ENCODE measurements at regions of chr1 and their contacts with region 1.

Region 1: GRCh38 chr1:2557492-2558412 is 1.6 kb downstream of the TNFRSF14 start:
- DNase-seq: no peak
- ATAC-seq: peak in 5 of 8 donors; percentile 1 to 10 (median 3)
- H3K4me3 ChIP-seq: peak overlapping the region; percentile 45 to 81 (median 68)
- H3K27ac ChIP-seq: peak overlapping the region in 9 of 10 donors; percentile 91 to 95 (median 93)
- H3K4me1 ChIP-seq: peaks cover 8 to 44% (median 32%) of the 10 kb centered on the region in 9 donors
- H3K27me3 ChIP-seq: peaks cover 0 to 3% (median 0%) of the 10 kb centered on the region in 7 donors
- CTCF ChIP-seq: no peak

Region 2: DNA sequence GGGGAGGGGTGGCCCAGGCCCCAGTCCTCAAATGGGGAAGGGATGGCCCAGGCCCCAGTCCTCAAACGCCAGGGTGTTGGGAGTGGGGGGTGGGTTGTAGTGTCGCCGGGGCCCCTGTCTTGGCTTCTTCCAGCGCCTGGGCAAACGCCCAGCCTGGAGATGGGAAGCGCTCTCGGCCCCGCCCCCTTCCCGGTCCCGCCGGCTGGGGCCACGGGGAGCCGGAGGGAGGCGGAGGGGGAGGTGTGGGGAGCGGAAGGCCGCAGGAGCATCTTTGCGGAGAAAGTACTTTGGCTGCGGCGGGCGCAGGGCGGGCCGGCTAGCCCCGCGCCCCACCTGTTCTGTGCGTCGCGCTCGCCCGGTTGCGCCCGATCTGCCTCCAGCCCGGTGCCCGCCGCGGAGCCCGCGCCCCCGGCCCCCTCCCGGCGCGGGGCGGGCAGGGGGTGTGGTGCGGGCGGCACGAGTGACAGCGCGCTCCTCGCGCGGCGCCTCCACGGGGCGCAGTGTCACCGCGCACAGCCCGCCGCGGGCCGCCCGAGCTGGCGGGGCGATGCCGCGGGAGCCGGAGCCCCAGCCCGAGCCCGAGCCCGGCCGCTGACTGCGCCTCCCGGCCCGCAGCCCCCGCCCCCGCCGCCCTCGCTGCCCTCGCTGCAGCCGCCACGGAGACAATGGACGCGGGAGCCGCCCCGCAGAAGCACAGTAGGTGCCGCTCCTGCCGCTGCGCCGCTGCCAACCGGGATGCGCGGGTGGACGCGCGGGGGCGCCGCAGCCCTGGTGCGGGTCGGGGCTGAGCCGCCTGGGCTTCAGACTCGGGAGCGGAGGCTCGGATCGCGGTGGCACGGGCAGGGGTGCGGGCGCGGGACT is 114.2 kb before region 1 on chr1:
- intact Hi-C with region 1: no loop called
- DNase-seq: no peak
- ATAC-seq: no peak
- H3K4me3 ChIP-seq: no peak overlapping the region
- H3K27ac ChIP-seq: no peak overlapping the region
- H3K4me1 ChIP-seq: no peaks in the 10 kb centered on the region
- H3K27me3 ChIP-seq: peaks cover 15 to 76% (median 72%) of the 10 kb centered on the region in 7 donors
- CTCF ChIP-seq: peak in 3 of 9 donors; percentile 9 to 33 (median 23)

Region 3: GRCh38 chr1:2575801-2576663 is 18.3 kb after region 1 on chr1:
- intact Hi-C with region 1: loop called in 1 of 10 experiments (anchors 2 kb)
- DNase-seq: peak in 1 of 2 donors; percentile 13
- ATAC-seq: peak in 1 of 8 donors; percentile 6
- H3K4me3 ChIP-seq: peak overlapping the region in 3 of 10 donors; percentile 3 to 23 (median 22)
- H3K27ac ChIP-seq: peak overlapping the region; percentile 74 to 96 (median 82)
- H3K4me1 ChIP-seq: peaks cover 7 to 40% (median 29%) of the 10 kb centered on the region in 9 donors
- H3K27me3 ChIP-seq: peaks cover 0 to 7% (median 0%) of the 10 kb centered on the region in 7 donors
- CTCF ChIP-seq: no peak

Region 4: DNA sequence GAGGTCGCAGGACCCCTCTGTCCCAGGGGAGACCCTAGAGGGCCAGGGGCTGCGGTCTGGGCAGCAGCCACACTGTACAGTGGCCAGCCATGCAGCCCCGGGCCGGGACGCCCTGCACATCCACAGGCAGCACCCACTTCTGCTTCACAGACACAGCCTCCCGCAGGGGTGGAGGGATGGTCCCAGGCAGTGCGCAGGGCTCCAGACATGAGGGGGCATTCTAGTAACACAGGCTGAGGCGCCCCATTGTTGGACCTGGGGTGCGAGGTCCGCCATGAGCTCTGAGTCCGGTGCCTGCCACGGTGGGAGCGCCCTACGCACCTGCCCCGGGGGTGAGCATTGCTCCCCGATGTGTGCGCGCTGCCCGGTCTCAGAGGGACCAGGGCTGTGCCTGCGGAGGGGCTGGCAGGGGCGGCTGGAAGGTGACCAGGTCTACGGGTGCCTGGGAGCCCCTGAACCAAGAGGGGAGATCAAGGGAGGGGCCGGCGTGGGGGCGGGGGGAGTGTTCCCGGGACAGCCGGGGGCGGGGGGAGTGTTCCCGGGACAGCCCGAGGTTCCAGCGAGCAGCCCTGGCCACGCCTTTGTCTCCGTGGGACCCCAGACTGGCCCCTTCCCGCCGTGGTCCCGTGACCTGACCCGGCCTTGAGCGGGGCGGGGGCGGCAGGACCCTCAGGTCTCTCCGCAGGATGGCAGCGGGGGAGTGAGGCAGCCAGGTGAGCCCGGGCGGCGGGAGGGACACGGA is 70.6 kb after region 1 on chr1:
- intact Hi-C with region 1: no loop called
- DNase-seq: no peak
- ATAC-seq: peak in 1 of 8 donors; percentile 24
- H3K4me3 ChIP-seq: no peak overlapping the region
- H3K27ac ChIP-seq: no peak overlapping the region
- H3K4me1 ChIP-seq: peaks cover 0 to 14% (median 4%) of the 10 kb centered on the region in 9 donors
- H3K27me3 ChIP-seq: peaks cover 26 to 85% (median 79%) of the 10 kb centered on the region in 7 donors
- CTCF ChIP-seq: no peak